Activated naive CD4-positive, alpha-beta T cell treated with anti-CD3 and anti-CD28 coated beads for 36 hours (primary cell): ENCODE measurements at regions of chr13 and their contacts with region 1.

Region 1: DNA sequence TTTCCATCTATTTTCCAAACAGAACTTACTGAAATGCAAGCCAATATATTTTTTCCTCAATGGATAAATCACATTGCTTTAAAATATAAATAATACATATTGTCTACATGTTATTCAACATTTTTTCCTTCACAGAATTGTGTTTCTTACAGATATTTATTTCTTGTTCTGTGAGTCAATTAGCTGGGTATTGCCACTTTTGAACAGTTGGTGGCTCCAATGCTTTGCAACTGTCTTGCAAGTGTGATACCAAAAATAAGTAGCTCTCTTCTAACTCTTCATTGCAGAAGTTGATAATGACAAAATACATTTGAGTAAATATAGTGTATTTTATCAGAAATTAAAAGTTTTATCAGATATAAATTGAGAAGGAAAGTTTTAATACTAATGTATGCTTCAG is 17.1 kb upstream of the GPC5 start:
- DNase-seq: peak; percentile 21
- H3K4me3 Mint-ChIP-seq: no peak overlapping the region
- H3K27ac Mint-ChIP-seq: no peak overlapping the region
- H3K4me1 Mint-ChIP-seq: no peaks in the 10 kb centered on the region
- H3K27me3 Mint-ChIP-seq: peaks cover 5% of the 10 kb centered on the region

Region 2: DNA sequence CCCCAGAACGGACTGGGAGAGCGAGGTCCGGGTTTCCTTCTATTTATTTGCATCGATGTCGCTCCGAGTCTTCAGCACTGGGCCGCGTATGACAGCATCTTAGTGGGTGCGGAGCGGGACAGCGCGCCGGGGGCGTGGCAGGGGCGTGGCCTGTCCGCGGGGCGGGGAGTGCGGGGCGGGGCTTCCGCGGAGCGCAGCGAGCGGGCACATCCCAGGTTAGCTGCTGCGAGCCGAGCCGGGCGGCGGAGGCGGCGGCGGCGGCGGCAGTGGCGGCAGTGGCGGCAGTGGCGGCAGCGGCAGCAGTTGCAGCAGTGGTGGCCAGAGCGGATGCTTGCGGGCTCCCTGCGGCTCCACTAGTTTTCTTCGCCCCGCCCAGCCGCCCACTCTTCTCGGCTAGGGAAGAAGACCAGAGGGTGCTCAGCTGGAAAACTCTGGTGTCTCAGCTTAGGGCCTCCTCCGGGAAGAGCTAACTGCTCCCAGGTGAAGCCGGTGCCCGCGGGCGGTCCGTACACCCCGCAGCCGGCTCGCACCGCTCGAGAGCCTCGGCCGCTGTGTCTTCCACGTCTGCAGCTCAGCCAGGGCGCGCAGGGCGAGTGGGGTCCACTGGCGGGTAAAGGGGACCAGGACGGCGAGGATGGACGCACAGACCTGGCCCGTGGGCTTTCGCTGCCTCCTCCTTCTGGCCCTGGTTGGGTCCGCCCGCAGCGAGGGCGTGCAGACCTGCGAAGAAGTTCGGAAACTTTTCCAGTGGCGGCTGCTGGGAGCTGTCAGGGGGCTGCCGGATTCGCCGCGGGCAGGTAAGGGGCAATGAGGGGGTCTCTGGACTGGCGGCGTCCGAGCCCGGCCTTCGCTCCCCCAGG is 17.3 kb after region 1 on chr13 and contains the start of gene GPC5:
- CTCF ChIA-PET with region 1: interaction called, 11 read pairs
- intact Hi-C with region 1: loop called (anchors 1 kb)
- DNase-seq: peak; percentile 84
- H3K4me3 Mint-ChIP-seq: peak within 1 kb of the TSS; percentile 75
- H3K27ac Mint-ChIP-seq: no peak within 1 kb of the TSS
- H3K4me1 Mint-ChIP-seq: peaks cover 17% of the 10 kb centered on the region
- H3K27me3 Mint-ChIP-seq: peaks cover 52% of the 10 kb centered on the region
- total RNA-seq, gene GPC5: 0.38 to 0.40 TPM

Region 3: DNA sequence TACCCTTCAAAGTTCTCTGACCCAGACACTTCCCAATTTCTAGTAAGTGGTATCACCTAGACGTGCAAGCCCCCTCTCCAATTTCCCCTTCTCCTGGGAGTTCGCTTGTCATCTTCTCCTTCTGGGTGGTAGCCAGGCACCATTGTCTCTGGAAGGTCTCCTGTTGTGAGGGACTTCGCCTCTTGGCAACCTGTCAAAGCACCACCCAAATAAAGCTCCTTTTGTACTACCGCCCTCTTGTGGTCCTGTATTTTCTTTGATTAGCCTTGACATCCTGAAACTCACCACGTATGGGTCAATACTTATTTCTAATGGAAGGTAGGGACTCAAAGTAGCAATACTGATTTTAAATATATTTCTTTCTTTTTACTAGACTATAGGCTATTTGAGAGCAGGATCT is 25.2 kb after region 1 on chr13:
- CTCF ChIA-PET with region 1: interaction called, 26 read pairs
- intact Hi-C with region 1: loop called (anchors 1 kb)
- DNase-seq: peak; percentile 24
- H3K4me3 Mint-ChIP-seq: no peak overlapping the region
- H3K27ac Mint-ChIP-seq: no peak overlapping the region
- H3K4me1 Mint-ChIP-seq: no peaks in the 10 kb centered on the region
- H3K27me3 Mint-ChIP-seq: peaks cover 11% of the 10 kb centered on the region

Region 4: GRCh38 chr13:91523116-91523515 is 141.7 kb after region 1 on chr13:
- CTCF ChIA-PET with region 1: no interaction called
- intact Hi-C with region 1: no loop called
- DNase-seq: no peak
- H3K4me3 Mint-ChIP-seq: no peak overlapping the region
- H3K27ac Mint-ChIP-seq: no peak overlapping the region
- H3K4me1 Mint-ChIP-seq: no peaks in the 10 kb centered on the region
- H3K27me3 Mint-ChIP-seq: no peaks in the 10 kb centered on the region

Region 5: DNA sequence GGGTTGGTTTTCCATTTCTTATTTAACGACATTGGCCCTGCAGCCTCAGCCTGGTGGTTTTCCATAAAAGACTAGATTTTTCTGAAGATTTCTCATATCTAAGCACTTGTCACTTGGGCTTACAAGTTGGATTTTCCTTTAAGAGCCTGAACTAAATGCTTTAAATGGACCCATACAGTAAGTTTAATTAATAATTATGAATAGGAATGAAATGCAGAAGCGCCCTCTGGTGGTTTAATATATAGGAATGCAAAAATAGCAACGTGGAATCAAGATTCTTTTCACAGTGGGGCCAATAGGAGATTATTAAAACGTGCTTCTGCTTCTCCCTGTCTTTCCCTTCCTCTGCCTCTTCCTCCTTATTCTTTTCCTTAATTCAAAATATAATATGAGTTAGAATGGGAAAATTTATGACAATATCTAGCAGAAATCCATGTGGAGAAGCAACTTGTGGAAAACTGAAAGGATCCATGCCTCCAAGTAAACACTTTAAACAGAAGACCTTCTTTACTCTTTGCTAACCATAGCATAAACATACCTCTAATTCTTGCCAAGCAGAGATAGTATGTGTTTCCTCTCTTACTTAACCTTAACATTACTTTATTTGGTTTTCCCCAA is 341.0 kb after region 1 on chr13:
- CTCF ChIA-PET with region 1: interaction called, 18 read pairs
- intact Hi-C with region 1: loop called (anchors 1 kb)
- DNase-seq: no peak
- H3K4me3 Mint-ChIP-seq: no peak overlapping the region
- H3K27ac Mint-ChIP-seq: no peak overlapping the region
- H3K4me1 Mint-ChIP-seq: no peaks in the 10 kb centered on the region
- H3K27me3 Mint-ChIP-seq: peaks cover 2% of the 10 kb centered on the region

Region 6: DNA sequence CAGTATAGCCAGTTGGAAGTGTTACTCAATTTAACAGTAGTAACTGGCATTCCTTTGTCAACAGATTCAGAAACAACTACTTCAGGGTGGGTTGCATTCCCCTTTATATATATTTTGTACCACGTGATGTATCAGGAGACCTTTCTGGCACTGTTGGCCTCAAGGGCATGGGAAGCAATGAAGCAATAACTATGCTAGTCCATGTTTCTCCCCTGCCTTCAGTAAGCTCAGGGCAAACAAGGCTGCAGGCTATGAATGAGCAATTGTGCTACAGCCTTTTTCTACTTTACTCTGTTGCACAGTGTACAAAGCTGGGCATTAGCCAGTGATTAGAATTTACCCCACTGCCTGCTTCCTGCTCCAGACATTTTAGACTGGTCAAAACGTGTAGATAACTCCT is 365.8 kb after region 1 on chr13:
- CTCF ChIA-PET with region 1: no interaction called
- intact Hi-C with region 1: no loop called
- DNase-seq: no peak
- H3K4me3 Mint-ChIP-seq: no peak overlapping the region
- H3K27ac Mint-ChIP-seq: no peak overlapping the region
- H3K4me1 Mint-ChIP-seq: no peaks in the 10 kb centered on the region
- H3K27me3 Mint-ChIP-seq: no peaks in the 10 kb centered on the region